HAP-1 (cell line): ENCODE measurements at regions of chr12 and their contacts with region 1.

Region 1: DNA sequence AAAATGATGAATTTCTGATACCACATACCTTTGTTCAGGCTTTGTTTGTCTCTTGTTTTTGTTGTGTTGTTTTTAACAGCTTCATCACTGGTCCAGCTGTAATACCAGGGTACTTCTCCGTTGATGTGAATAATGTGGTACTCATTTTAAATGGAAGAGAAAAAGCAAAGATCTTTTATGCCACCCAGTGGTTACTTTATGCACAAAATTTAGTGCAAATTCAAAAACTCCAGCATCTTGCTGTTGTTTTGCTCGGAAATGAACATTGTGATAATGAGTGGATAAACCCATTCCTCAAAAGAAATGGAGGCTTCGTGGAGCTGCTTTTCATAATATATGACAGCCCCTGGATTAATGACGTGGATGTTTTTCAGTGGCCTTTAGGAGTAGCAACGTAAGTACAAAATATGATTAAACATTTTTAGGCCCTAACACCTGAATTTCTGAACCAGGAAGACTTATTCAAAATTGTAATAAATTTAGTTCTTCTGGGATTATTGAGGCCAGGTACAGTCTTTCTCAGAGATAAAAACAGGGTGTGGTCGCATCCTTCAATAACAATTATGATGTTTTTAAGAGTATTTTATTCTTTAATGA is 22.4 kb downstream of the RXYLT1 start:
- DNase-seq: peak in 1 of 2 experiments; percentile 59
- H3K4me3 ChIP-seq: no peak overlapping the region
- H3K4me1 ChIP-seq: no peaks in the 10 kb centered on the region
- H3K27me3 ChIP-seq: no peaks in the 10 kb centered on the region

Region 2: DNA sequence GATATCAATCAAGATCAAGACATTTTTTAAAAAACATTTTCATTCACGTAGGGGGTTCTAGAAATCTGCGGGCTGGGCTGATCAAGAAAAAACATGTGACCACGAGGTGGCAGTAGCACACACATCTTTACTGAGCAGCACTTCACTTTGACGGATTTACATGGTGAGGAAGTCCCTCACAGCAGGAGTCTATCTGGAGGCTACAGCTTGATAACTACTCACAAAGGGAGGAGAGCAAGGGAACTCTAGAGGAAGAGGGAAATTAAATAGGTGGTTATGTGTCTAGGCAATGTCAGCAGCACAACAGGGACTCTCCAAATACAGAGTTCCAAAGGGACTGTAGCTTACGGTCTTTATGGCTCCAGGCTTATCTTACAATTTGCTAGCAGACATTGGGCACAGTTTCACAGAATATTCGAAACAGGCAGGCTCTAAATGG is 381.9 kb before region 1 on chr12:
- in situ Hi-C with region 1: loop called (anchors 25 kb)
- DNase-seq: peak; percentile 67 to 83
- H3K4me3 ChIP-seq: no peak overlapping the region
- H3K4me1 ChIP-seq: no peaks in the 10 kb centered on the region
- H3K27me3 ChIP-seq: no peaks in the 10 kb centered on the region; the same call in 1 of the 2 replicates

Region 3: GRCh38 chr12:63940310-63941005 is 138.3 kb after region 1 on chr12:
- in situ Hi-C with region 1: no loop called
- DNase-seq: peak; percentile 11 to 27
- H3K4me3 ChIP-seq: no peak overlapping the region
- H3K4me1 ChIP-seq: peaks cover 19% of the 10 kb centered on the region
- H3K27me3 ChIP-seq: no peaks in the 10 kb centered on the region

Region 4: DNA sequence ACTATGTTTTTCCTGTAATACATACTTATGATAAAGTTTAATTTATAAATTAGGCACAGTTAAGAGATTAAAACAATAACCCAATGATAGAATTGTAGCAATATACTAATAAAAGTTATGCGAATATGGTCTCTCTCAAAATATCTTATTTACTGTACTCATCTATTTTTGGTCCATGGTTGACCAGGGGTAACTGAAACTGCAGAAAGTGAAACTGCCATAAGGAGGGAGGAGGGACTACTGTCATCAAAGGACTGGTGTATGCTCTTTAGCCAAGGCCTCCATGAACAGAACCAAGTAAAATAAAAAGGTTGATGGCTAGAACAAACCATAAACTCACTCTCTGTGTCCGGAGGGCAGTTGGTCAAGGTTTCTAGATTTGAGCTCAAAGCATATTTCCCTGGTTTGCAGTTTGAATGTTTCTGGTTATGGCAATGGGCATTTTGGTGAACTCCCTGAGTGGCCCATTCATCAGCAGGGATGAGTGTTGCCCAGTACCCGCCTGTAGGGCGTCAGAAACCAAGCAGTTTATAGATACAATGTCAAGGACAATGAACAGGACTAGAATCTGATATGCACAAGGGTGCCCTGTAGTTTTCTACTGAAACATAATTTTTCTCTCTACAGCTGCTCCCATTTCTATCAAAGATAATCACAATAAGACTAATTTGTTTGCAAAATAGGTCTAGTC is 1387.1 kb after region 1 on chr12:
- in situ Hi-C with region 1: no loop called
- DNase-seq: no peak
- H3K4me3 ChIP-seq: no peak overlapping the region
- H3K4me1 ChIP-seq: peaks cover 2% of the 10 kb centered on the region; the same call in 1 of the 2 replicates
- H3K27me3 ChIP-seq: no peaks in the 10 kb centered on the region